AG04449 (cell line): ENCODE measurements at regions of chr9 and their contacts with region 1.

Region 1: GRCh38 chr9:90914868-90915483 is 113.4 kb downstream of the SYK start:
- DNase-seq: no peak
- H3K4me3 ChIP-seq: no peak overlapping the region
- CTCF ChIP-seq: peak; percentile 83

Region 2: GRCh38 chr9:90882991-90883600 is 31.9 kb before region 1 on chr9:
- CTCF ChIA-PET with region 1: no interaction called
- POLR2A ChIA-PET with region 1: no interaction called
- DNase-seq: no peak
- H3K4me3 ChIP-seq: no peak overlapping the region
- CTCF ChIP-seq: no peak

Region 3: DNA sequence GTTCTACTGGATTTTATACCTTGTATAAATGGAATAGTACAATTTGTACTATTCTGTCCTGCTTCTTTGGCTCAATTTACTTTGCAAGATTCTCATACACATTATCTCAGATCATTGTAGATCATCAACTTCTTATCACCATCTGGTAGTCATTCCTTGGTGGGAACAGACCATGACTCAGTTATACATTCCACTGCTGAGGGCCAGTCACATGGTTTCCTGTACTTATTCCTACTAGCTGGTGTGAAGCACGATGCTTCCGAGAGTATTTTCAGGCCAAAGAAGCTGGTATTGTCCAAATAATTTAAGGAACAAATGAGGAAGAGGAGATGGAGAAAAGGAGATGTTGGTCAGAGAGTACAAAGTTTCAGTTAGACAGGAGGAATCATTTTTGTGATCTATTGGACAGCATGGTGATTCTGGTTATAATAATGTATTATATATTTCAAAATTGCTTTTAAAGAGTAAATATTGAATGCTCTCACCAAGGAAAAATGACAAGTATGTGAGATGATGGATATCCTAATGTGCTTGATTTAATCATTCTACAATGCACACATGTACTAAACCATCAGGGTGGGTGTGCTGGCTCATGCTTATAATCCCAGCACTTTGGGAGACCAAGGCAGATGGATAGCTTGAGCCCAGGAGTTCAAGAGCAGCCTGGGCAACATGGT is 10.7 kb after region 1 on chr9:
- CTCF ChIA-PET with region 1: interaction called, 16 read pairs
- POLR2A ChIA-PET with region 1: no interaction called
- DNase-seq: peak; percentile 79
- H3K4me3 ChIP-seq: no peak overlapping the region
- CTCF ChIP-seq: no peak

Region 4: DNA sequence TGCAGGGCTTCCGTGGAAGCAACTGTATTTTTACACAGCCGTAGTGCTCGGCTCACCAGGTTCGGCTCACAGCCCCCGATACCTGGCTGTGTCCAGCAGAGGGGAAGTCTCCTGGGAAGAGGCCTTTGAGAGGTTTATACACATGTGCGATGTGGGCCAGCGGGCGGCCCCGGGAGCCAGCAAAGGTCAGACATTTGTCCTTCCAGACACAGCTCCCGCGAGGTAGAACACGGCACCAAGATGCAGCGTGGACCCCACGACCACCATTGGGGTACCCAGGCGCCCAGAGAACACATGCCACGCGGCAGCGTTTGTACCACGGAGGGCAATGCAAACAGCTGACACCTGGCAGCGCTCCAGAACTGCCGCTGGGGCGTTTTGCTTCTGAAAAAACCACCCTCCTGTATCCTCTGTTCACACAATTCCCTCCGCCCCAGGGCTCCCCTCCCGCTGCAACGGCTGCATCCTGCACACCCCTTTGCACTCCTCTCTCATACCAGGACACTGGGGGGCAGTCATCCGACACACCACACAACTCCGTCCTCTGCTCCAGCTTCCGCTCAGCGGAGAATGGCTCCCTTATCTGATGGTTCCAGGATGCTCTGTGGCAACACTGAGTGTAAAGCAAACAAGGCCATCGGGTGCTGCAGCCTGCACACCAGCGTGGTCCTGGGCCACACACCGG is 122.0 kb after region 1 on chr9:
- CTCF ChIA-PET with region 1: interaction called, 28 read pairs
- POLR2A ChIA-PET with region 1: no interaction called
- DNase-seq: peak; percentile 66
- H3K4me3 ChIP-seq: peak overlapping the region; percentile 8; the same call in 1 of the 2 replicates
- CTCF ChIP-seq: peak; percentile 72

Region 5: GRCh38 chr9:91659529-91660495 is 744.8 kb after region 1 on chr9:
- CTCF ChIA-PET with region 1: interaction called, 10 read pairs
- POLR2A ChIA-PET with region 1: no interaction called
- DNase-seq: no peak
- H3K4me3 ChIP-seq: no peak overlapping the region
- CTCF ChIP-seq: peak; percentile 82

Region 6: DNA sequence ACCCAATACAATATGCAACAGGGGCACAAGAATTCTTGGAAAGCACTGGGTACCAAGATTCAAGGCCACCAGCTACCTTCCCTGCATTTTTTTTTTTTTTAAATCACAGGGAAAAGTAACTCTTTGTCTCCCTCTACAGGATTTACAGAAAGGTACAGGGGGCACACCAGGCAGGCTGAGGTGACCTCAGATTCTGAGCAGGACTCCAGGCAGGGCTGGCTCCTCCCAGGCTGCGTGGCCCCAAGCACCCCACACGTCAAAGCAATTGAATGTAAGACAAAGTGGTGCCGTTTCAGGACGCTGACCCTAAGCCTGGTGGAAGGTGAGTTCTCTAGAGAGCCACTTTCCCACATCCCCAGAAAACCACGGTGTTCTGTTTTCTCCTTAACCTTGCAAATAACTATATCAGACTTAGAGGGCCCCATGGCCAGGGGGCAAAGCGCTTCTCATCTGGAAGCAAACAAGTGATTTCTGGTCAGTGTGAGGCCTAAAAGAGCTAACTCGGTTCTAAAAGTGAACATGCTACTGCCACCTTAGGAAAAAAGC is 812.4 kb after region 1 on chr9:
- CTCF ChIA-PET with region 1: interaction called, 71 read pairs
- POLR2A ChIA-PET with region 1: no interaction called
- DNase-seq: no peak
- H3K4me3 ChIP-seq: no peak overlapping the region
- CTCF ChIP-seq: peak; percentile 46